ENCODE measurements at regions of chr7 and their contacts with region 1.

Region 1: DNA sequence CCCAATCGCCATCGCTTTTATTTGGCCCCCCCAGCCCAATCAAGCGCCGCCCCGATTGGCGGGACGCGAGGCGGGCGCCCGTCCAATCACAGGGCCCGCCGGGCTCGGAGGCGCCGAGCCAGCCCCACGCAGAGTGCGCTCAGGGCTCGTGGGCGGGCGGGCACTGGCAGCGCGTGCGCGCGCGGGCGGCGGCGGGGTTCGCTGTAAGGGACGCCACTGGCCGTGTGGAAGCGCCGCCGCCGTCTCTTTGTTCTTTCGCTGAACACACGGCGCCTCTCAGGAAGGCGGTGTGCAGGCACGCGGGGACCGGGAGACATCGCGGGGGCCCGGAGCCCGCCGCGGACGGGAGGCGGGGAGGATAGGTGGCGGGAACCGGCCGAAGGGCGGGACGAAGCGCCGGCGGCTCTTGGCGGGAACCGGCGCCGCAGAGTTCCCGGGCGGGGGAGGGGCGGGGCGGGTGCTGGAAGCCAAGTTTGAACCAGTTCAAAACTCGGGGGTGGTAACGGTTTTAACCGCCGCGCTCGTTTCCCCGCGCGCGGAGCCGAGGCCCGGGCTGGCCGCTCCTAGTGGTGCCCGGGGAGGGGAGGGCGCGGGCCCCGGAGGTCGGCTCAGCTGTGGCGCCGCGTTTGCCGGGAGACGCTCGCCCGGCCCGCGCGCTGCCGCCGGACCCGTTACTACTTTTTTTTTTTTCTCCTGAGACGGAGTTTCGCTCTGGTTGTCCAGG is 370 bp upstream of the EZH2 start:
- DNase-seq: peak; percentile 77 to 97 (median 93)

Region 2: GRCh38 chr7:148698397-148699023 is 186.0 kb before region 1 on chr7 and contains the start of gene CUL1:
- intact Hi-C with region 1: loop called (anchors 10 kb)
- DNase-seq: peak; percentile 25 to 91 (median 81)

Region 3: GRCh38 chr7:148747275-148747674 is 137.2 kb before region 1 on chr7:
- intact Hi-C with region 1: no loop called
- DNase-seq: no peak

Region 4: DNA sequence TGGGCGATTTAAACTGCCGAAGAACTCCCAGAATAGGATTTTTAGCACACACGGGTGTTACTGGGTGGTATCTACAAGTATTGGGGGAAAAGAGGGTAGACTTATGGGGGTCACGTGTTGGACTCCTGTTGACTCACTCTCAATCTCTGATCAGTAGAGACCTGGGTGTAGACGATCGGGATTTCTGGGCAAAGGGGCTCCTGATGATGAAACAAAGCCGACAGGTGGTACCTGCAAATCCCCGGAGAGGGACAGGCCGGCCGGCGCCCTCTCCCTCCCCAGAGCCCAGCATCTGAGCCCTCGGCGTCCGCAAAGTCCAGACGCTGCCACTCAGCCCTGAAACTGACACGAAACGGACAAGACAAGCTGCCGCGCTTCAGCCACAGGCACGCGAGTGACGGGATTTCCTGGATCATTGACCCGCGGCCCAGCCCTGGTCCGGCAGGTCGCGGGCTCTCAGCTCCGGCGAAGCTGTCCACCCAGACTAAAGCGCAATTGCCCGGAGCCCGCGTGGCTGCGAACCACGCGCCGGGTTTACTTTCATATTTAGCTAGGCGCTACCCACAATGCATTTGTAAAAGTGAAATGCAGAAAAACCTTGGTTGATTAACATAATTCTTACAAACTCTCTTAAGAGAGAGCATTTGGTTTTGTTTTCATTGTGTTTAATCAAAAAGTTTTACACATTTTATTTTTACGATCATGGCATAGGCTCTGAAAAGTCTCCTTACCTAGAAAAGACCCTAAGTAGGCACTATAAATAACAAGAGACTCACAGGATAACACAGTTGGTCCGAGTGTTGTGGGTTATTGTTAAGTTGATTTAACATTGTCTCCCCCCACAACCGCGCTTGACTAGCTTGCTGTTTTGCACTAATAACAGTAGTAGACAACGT is 56.5 kb after region 1 on chr7:
- intact Hi-C with region 1: loop called (anchors 10 kb)
- DNase-seq: peak; percentile 41 to 86 (median 71)